Transverse colon (tissue), 4 donors: ENCODE measurements at regions of chr4 and their contacts with region 1.

Region 1: GRCh38 chr4:76515975-76516843 is 81.2 kb downstream of the SHROOM3 start:
- DNase-seq: no peak
- H3K4me3 ChIP-seq: no peak overlapping the region
- H3K27ac ChIP-seq: no peak overlapping the region
- H3K4me1 ChIP-seq: peaks cover 0 to 17% (median 8%) of the 10 kb centered on the region in 4 donors
- H3K27me3 ChIP-seq: no peaks in the 10 kb centered on the region
- CTCF ChIP-seq: no peak
- EP300 ChIP-seq: no peak
- POLR2A ChIP-seq: no peak

Region 2: GRCh38 chr4:76275486-76276124 is 240.6 kb before region 1 on chr4:
- in situ Hi-C with region 1: no loop called
- intact Hi-C with region 1: no loop called
- DNase-seq: no peak
- H3K4me3 ChIP-seq: no peak overlapping the region
- H3K27ac ChIP-seq: no peak overlapping the region
- H3K4me1 ChIP-seq: peaks cover 0 to 29% (median 6%) of the 10 kb centered on the region in 4 donors
- H3K27me3 ChIP-seq: no peaks in the 10 kb centered on the region
- CTCF ChIP-seq: no peak
- EP300 ChIP-seq: no peak
- POLR2A ChIP-seq: no peak

Region 3: GRCh38 chr4:76354517-76355473 is 161.4 kb before region 1 on chr4:
- in situ Hi-C with region 1: no loop called
- intact Hi-C with region 1: no loop called
- DNase-seq: peak; percentile 11
- H3K4me3 ChIP-seq: no peak overlapping the region
- H3K27ac ChIP-seq: no peak overlapping the region
- H3K4me1 ChIP-seq: no peaks in the 10 kb centered on the region
- H3K27me3 ChIP-seq: no peaks in the 10 kb centered on the region
- CTCF ChIP-seq: no peak
- EP300 ChIP-seq: no peak
- POLR2A ChIP-seq: no peak

Region 4: DNA sequence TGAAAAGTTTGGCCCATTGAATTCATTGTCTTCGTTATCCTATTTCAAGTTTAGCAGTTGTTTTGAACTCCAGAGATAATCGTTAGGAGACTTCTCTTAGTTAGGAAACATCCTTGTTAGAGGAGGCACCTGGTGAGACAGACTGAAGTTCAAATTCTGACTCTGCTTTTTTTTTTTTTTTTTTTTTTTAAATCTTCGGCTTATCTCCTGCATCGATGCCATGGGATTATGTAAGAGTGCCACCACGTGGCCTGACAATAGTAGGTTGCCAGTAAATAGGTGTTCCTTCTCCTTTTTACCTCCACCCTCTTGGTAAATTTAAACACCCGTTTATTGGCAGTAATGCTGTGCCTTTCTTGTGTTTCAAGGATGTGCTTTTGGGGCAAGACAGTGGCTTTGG is 232.4 kb after region 1 on chr4:
- in situ Hi-C with region 1: loop called in 3 of 4 experiments (anchors 5 to 25 kb)
- intact Hi-C with region 1: loop called (anchors 5 kb)
- DNase-seq: peak; percentile 63
- H3K4me3 ChIP-seq: no peak overlapping the region
- H3K27ac ChIP-seq: peak overlapping the region in 2 of 4 donors; percentile 2 to 28
- H3K4me1 ChIP-seq: peaks cover 0 to 24% (median 3%) of the 10 kb centered on the region in 4 donors
- H3K27me3 ChIP-seq: no peaks in the 10 kb centered on the region
- CTCF ChIP-seq: peak in 3 of 5 experiments; percentile 22 to 30 (median 28)
- EP300 ChIP-seq: no peak
- POLR2A ChIP-seq: no peak

Region 5: DNA sequence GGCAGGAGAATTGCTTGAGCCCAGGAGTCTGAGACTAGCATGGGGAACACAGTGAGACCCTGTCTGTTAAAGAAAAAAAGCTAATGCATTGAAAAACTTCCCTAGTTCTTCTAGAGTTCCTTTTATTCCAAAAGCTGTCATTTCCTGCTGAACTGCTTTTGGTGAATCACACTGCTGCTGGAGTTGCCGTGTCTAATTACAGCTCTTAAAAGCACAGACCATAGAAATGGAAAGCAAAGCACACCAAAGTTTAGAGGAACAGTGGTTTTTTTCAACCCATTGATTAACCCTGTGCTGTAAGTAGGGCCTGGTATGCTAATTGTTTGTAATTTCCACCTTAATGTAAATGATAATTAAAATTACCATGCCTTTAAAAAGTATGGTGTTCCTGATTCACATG is 485.7 kb after region 1 on chr4:
- in situ Hi-C with region 1: no loop called
- intact Hi-C with region 1: no loop called
- DNase-seq: no peak
- H3K4me3 ChIP-seq: no peak overlapping the region
- H3K27ac ChIP-seq: peak overlapping the region; percentile 3 to 31 (median 22)
- H3K4me1 ChIP-seq: peaks cover 0 to 21% (median 6%) of the 10 kb centered on the region in 4 donors
- H3K27me3 ChIP-seq: no peaks in the 10 kb centered on the region
- CTCF ChIP-seq: no peak
- EP300 ChIP-seq: no peak
- POLR2A ChIP-seq: no peak